Ascending aorta (tissue), 2 donors: ENCODE measurements at regions of chr10 and their contacts with region 1.

Region 1: GRCh38 chr10:24483489-24484100 is 240.1 kb downstream of the ARHGAP21 start:
- DNase-seq: no peak
- H3K4me3 ChIP-seq: no peak overlapping the region
- H3K27ac ChIP-seq: no peak overlapping the region
- H3K4me1 ChIP-seq: no peaks in the 10 kb centered on the region
- H3K27me3 ChIP-seq: no peaks in the 10 kb centered on the region
- CTCF ChIP-seq: no peak

Region 2: DNA sequence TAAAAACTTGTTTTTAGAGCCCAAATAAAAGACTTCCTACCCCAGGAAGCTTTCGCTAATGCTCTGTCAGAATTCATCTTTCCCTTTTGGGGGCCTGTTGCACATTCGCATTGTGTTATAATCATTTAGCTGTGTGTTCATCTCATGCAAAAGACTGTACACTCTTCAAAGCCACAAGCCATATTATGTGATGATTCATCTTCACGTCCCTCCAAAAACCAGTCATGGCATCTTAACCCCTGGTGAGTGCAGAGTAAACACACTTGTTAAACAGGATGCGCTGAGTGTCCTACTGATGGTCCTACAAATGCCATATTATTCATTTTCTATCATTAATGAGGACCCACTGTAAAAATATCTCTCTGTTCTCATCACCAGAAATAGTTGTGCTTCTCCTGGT is 39.3 kb before region 1 on chr10:
- intact Hi-C with region 1: loop called (anchors 5 kb)
- DNase-seq: no peak
- H3K4me3 ChIP-seq: no peak overlapping the region
- H3K27ac ChIP-seq: no peak overlapping the region
- H3K4me1 ChIP-seq: peaks cover 0 to 8% of the 10 kb centered on the region in 2 donors
- H3K27me3 ChIP-seq: no peaks in the 10 kb centered on the region
- CTCF ChIP-seq: no peak

Region 3: GRCh38 chr10:24503461-24504320 is 20.1 kb after region 1 on chr10:
- intact Hi-C with region 1: no loop called
- DNase-seq: no peak
- H3K4me3 ChIP-seq: no peak overlapping the region
- H3K27ac ChIP-seq: no peak overlapping the region
- H3K4me1 ChIP-seq: no peaks in the 10 kb centered on the region
- H3K27me3 ChIP-seq: no peaks in the 10 kb centered on the region
- CTCF ChIP-seq: peak in 2 of 3 experiments; percentile 7 to 59

Region 4: DNA sequence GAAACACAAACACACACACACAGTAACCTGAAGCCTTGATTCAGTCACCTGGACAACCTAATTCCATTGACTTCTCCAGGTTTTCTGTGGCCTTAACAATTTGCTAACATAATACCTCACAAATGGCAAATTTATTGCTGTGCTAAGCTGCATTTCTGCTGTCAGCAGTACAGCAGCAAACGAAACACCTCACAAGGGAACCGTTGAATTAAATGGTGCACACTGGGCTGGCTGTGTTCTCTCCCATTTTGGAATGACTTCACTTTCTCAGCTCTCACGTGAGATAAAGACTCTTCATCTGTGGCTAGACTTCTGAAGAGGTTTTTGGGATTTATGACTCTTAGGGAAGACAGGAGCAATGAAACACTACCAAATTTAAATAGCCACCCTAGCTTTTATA is 843.7 kb after region 1 on chr10:
- intact Hi-C with region 1: no loop called
- DNase-seq: no peak
- H3K4me3 ChIP-seq: no peak overlapping the region
- H3K27ac ChIP-seq: no peak overlapping the region
- H3K4me1 ChIP-seq: no peaks in the 10 kb centered on the region
- H3K27me3 ChIP-seq: no peaks in the 10 kb centered on the region
- CTCF ChIP-seq: no peak